Spleen (tissue), 13 donors: ENCODE measurements at regions of chr19 and their contacts with region 1.

Region 1: DNA sequence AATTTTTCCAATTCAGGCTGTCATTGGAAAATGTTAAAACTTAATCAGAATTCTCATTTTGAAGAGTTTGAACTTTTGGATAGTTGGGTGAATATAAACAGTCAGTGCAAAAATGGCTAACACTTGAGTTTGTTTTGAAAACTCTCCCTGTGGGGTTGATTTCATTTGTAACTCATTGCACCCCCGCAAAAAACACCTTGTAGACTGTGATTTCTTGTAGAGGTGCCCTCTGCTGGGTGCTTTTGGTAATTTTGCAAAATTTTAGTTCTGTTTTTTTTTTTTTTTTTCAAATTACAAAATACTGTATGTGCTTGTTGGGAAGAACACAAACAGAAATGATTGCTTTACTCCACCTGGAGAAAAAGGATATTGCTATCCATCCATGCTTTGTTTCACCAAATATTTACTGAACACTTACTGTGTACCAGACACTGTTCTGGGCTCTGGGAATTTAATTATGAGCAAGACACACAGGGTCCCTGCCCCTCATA is 28.2 kb upstream of the GPI start:
- DNase-seq: no peak
- H3K4me3 ChIP-seq: no peak overlapping the region
- H3K27ac ChIP-seq: peak overlapping the region in 3 of 8 donors; percentile 8 to 50 (median 21)
- H3K4me1 ChIP-seq: peaks cover 6 to 21% (median 10%) of the 10 kb centered on the region in 6 donors
- H3K27me3 ChIP-seq: no peaks in the 10 kb centered on the region
- CTCF ChIP-seq: peak; percentile 10 to 68 (median 58)
- POLR2A ChIP-seq: no peak

Region 2: DNA sequence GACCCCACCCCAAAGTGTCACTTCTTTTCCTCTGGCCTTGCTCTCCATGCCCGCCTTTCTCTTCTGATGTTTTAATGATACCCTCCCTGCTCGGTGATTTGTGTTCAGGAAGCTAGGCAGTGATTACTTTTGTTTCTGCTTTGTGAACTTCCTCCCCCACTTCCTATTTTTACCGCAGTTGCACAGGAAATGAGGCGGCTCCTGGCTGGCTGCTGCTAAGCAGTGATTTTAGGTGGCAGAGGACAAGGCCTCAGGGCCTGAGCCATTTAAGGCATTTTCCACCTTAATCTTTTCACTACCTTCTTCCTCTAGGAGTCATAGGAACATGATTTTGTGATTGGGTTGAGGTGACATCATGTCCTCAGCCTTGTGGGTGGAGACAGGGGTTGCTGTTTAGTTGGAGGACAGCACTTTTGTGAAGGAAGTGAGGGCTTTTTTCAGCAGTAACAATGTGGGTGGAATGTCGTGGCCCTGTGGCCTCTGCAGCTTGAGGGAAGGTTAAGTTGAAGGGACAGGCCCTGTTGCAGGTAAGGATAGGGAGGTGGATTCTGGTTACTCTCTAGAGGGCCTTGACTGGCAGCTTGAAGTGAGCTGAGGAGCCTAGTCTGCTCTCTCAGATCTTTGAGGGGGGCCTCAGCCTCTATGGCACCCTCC is 66.7 kb before region 1 on chr19:
- intact Hi-C with region 1: loop called (anchors 10 kb)
- DNase-seq: peak; percentile 91
- H3K4me3 ChIP-seq: peak overlapping the region in 4 of 8 donors; percentile 2 to 59 (median 6)
- H3K27ac ChIP-seq: peak overlapping the region; percentile 67 to 90 (median 87)
- H3K4me1 ChIP-seq: peaks cover 40 to 98% (median 84%) of the 10 kb centered on the region in 6 donors
- H3K27me3 ChIP-seq: no peaks in the 10 kb centered on the region
- CTCF ChIP-seq: peak in 2 of 11 experiments; percentile 5 to 18
- POLR2A ChIP-seq: peak in 2 of 3 donors; percentile 43 to 66